ENCODE measurements at regions of chr15 and their contacts with region 1.

Region 1: DNA sequence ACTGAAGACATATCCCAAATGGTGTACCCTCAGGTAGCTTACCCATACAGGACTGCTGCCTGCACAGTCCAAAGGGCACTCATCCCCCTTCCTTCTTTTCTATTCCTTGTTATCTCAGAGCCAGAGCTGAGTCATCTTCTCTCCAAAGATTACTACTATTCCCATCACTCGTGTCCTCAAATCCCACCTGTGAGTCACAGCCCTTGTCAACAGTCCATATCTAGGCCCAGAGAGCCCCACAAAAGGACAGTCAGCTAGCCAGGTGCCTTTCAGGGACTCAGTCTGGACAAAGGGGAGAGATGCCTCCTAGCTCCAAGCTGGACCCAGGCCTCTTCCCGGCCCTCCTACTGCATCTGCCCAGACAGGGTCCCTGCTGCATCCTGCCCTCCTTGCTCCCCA is 11.0 kb downstream of the PARP16 start:
- DNase-seq: no peak
- ATAC-seq: peak in 2 of 4 donors; percentile 35 to 43
- H3K4me3 ChIP-seq: no peak overlapping the region
- H3K27ac ChIP-seq: peak overlapping the region in 1 of 12 donors; percentile 28
- H3K4me1 ChIP-seq: peaks cover 0 to 18% (median 5%) of the 10 kb centered on the region in 12 donors
- H3K27me3 ChIP-seq: no peaks in the 10 kb centered on the region
- CTCF ChIP-seq: no peak
- POLR2A ChIP-seq: no peak

Region 2: DNA sequence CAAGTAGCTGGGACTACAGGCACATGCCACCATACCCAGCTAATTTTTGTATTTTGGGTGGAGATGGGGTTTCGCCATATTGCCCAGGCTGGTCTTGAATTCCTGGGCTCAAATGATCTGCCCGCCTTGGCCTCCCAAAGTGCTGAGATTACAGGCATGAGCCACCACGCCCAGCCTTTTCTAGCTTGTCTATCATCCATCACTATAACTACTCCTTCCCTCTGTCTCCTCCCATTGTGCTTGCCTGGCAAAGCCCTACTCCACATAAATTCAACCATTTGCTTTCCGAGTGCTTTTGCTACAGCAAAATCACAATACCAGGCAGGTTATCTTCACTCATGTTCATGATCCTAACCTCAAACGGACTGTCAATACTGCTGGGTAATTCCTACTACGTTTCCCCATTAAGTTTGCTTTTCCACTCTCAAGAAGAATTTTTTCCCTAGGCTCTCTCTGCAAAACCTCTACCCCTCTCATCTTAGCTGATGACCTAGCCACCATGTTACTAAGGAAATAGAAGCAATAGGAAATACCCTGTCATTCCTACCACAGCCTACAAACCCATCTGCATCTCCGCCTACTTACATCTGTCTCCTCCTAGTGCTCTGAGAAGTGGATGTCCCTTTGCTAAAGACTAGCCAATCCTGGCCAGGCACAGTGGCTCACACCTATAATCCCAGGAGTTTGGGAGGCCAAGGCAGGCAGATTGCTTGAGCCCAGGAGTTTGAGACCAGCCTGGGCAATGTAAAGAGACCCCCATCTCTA is 564.9 kb before region 1 on chr15:
- intact Hi-C with region 1: no loop called
- DNase-seq: no peak
- ATAC-seq: no peak
- H3K4me3 ChIP-seq: no peak overlapping the region
- H3K27ac ChIP-seq: peak overlapping the region in 1 of 12 donors; percentile 14
- H3K4me1 ChIP-seq: no peaks in the 10 kb centered on the region
- H3K27me3 ChIP-seq: no peaks in the 10 kb centered on the region
- CTCF ChIP-seq: no peak
- POLR2A ChIP-seq: no peak

Region 3: GRCh38 chr15:65049418-65049840 is 226.3 kb before region 1 on chr15:
- intact Hi-C with region 1: loop called in 2 of 10 experiments (anchors 10 kb)
- DNase-seq: peak; percentile 92 to 96 (median 94)
- ATAC-seq: peak; percentile 87 to 96 (median 92)
- H3K4me3 ChIP-seq: peak overlapping the region in 11 of 12 donors; percentile 1 to 52 (median 41)
- H3K27ac ChIP-seq: no peak overlapping the region
- H3K4me1 ChIP-seq: peaks cover 0 to 29% (median 11%) of the 10 kb centered on the region in 12 donors
- H3K27me3 ChIP-seq: no peaks in the 10 kb centered on the region
- CTCF ChIP-seq: no peak
- POLR2A ChIP-seq: no peak

Region 4: DNA sequence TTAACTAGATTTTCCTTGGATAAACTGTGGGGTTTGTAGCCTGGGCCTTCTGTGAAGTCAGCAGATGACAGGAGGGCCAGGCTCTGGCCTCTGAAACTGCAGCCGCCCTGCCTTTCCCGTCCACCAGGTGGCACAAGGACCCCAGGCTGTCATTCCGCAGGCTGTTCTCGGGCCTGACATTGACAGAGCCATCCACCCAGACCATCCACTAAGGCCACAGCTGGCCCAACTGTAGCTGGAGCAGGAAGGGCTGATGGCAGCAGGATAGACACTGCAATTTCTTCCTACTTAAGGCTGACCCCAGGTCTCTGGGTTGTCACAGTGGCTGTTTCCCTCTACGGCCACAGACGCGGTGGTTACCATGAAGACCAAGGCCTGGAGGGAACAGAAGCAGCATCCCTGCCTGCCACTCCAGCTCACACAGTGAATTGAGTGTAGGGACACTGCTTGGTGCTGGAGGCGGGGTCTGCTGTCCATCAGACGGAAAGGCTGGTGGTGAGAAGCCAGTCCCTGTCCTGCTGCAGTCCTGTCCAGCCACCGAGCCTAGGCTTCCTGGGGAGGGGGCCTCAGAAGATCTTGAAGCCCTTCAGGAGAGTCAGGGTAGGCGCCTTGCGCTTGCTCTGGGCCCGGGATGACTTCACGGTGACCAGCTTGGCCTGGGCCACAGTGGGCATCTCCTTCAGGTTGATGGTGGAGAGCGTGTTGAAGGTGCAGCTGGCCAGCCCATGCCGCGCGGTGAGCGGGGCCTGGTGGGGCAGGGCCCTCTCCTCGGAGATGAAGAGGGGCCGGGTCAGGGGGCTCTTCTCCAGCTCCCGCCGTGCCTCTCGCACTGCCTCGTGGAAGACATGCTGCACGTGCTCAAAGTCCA is 221.2 kb before region 1 on chr15:
- intact Hi-C with region 1: loop called in 2 of 10 experiments (anchors 10 kb)
- DNase-seq: peak; percentile 75 to 86 (median 78)
- ATAC-seq: peak; percentile 76 to 87 (median 82)
- H3K4me3 ChIP-seq: no peak overlapping the region
- H3K27ac ChIP-seq: peak overlapping the region in 7 of 12 donors; percentile 16 to 61 (median 56)
- H3K4me1 ChIP-seq: peaks cover 3 to 38% (median 19%) of the 10 kb centered on the region in 12 donors
- H3K27me3 ChIP-seq: no peaks in the 10 kb centered on the region
- CTCF ChIP-seq: peak; percentile 81 to 96 (median 92)
- POLR2A ChIP-seq: no peak

Region 5: DNA sequence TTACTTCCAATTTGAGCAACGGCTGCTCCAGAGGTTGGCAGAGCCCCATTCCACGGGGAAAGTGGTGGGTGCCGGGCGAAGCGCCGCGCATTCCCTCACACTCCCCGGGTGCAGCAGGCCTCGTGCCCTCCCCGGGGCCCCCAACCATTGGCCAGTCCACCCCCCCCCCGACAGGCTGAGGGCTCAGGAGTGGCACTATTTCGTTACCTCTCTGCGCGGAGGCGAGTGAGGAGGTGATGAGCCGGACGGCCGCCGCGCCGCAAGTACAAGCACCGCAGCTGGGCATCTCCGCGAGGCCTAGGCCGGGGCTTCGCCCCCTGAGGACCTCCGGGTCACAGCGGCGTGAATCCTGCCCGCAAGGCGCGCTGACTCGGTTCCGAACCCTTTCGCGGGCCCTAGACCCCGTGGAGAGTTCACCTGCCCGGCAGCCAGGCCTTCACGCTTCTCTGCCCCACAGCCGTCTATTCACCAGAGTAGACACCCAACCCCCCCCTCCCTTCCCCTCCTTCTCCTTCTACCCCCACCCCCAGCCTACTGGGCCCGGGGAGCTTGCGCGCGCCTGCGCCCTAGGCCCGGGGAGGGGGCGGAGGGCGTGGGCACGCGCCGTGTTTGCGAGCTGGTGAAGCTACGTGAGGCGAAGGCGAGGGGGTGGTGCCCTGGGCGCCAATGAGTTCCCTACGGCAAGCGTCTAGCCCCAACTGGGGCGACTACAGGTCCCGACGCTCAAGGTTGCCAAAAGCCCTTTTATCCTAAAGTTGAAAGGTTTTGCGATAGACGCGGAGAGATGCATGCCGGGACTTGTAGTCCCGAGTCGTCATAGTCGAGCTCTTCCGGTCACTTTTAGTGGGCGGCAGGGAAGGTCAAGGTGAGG is 90.6 kb before region 1 on chr15 and contains the start of gene CLPX:
- intact Hi-C with region 1: loop called (anchors 1 to 5 kb)
- DNase-seq: peak; percentile 92 to 96 (median 94)
- ATAC-seq: peak; percentile 94 to 98 (median 96)
- H3K4me3 ChIP-seq: peak within 1 kb of the TSS; percentile 60 to 100 (median 86)
- H3K27ac ChIP-seq: peak within 1 kb of the TSS; percentile 62 to 99 (median 96)
- H3K4me1 ChIP-seq: peaks cover 0 to 35% (median 18%) of the 10 kb centered on the region in 12 donors
- H3K27me3 ChIP-seq: no peaks in the 10 kb centered on the region
- CTCF ChIP-seq: no peak
- POLR2A ChIP-seq: peak in 1 of 2 donors; percentile 52
- total RNA-seq, gene CLPX: 43.8 to 64.8 (median 57.2) TPM

Region 6: GRCh38 chr15:65192016-65192415 is 83.7 kb before region 1 on chr15:
- intact Hi-C with region 1: loop called (anchors 1 to 5 kb)
- DNase-seq: no peak
- ATAC-seq: no peak
- H3K4me3 ChIP-seq: no peak overlapping the region
- H3K27ac ChIP-seq: no peak overlapping the region
- H3K4me1 ChIP-seq: peaks cover 0 to 12% (median 0%) of the 10 kb centered on the region in 12 donors
- H3K27me3 ChIP-seq: no peaks in the 10 kb centered on the region
- CTCF ChIP-seq: no peak
- POLR2A ChIP-seq: no peak

Region 7: DNA sequence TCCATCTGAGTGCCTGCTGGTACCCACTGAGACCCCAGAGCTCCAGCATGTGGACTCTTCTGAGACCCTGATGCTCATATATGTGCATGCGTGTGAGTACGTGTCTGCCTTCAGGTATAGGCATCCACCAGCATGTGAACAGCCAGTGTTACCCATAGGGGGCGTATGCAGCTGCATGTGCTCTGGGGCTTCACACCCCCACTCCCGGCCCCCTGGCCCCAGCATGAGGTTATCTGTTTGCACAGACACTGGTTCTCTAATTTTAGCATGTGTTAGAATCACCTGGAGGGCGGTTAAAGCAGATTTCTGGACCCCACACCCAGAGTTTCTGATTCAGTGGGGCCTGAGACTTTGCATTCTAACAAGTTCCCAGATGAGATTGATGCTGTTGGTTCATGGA is 63.6 kb before region 1 on chr15:
- intact Hi-C with region 1: loop called in 1 of 10 experiments (anchors 5 kb)
- DNase-seq: no peak
- ATAC-seq: no peak
- H3K4me3 ChIP-seq: no peak overlapping the region
- H3K27ac ChIP-seq: peak overlapping the region in 6 of 12 donors; percentile 4 to 62 (median 48)
- H3K4me1 ChIP-seq: peaks cover 0 to 48% (median 6%) of the 10 kb centered on the region in 12 donors
- H3K27me3 ChIP-seq: no peaks in the 10 kb centered on the region
- CTCF ChIP-seq: peak in 7 of 12 donors; percentile 12 to 38 (median 21)
- POLR2A ChIP-seq: no peak